GM12878 (cell line): ENCODE measurements at regions of chr1 and their contacts with region 1.

Region 1: DNA sequence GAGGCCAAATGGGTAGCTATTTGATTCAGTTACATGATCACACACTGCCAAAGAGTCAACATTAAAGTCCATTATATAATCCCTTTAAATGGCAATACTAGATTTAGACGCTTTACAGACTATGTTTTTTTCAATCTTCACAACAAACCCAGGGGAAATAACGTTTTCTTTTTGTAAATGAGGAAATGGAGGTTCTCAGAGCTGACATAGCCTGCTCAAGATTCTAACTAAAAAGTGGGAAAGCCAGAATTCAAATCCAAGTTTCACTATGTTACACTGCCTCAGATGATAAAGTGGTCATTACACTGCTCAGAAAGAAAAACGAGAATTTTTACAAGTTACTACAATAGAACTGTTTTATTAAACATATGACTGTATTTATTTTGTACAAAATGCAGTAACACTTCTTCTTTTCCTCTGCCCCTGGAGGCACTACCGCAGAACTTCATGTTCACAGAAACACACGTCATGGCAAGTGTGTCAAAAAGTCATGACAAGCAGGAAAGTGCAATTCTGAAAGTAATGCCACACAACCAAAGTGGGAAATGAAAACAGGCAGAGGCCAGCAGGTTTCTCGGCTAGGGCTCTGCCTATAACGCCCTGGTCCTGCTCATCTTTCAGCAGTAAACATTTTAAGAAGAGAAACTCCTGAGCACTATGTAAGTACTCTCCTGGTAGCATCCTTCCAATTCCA is 19.0 kb downstream of the THEMIS2 start:
- DNase-seq: peak; percentile 86
- ATAC-seq: peak; percentile 71
- H3K4me3 ChIP-seq: peak overlapping the region; percentile 22
- H3K27ac ChIP-seq: peak overlapping the region; percentile 95
- H3K4me1 ChIP-seq: peaks cover 55% of the 10 kb centered on the region
- H3K27me3 ChIP-seq: no peaks in the 10 kb centered on the region
- CTCF ChIP-seq: peak; percentile 17 to 46 (median 44); a peak in 4 of 6 replicates
- EP300 ChIP-seq: peak; percentile 80 to 97; a peak in 3 of 4 replicates
- POLR2A ChIP-seq: no peak
- RAD21 ChIP-seq: peak; percentile 25; the same call in 1 of the 2 replicates

Region 2: GRCh38 chr1:27872059-27872801 is 19.1 kb before region 1 on chr1 and contains the start of gene THEMIS2:
- CTCF ChIA-PET with region 1: interaction called, 16 read pairs
- POLR2A ChIA-PET with region 1: interaction called, 63 read pairs
- RAD21 ChIA-PET with region 1: interaction called, 46 read pairs
- SMC1A ChIA-PET with region 1: interaction called, 43 read pairs
- in situ Hi-C with region 1: no loop called
- intact Hi-C with region 1: loop called (anchors 2 kb)
- DNase-seq: no peak
- ATAC-seq: peak; percentile 66
- H3K4me3 ChIP-seq: peak within 1 kb of the TSS; percentile 90
- H3K27ac ChIP-seq: peak within 1 kb of the TSS; percentile 93
- H3K4me1 ChIP-seq: peaks cover 44% of the 10 kb centered on the region
- H3K27me3 ChIP-seq: no peaks in the 10 kb centered on the region
- CTCF ChIP-seq: no peak
- EP300 ChIP-seq: no peak
- POLR2A ChIP-seq: peak; percentile 88
- RAD21 ChIP-seq: no peak
- polyA plus RNA-seq, gene THEMIS2: 9.1 to 12.9 TPM

Region 3: GRCh38 chr1:27906759-27907158 is 15.4 kb after region 1 on chr1:
- CTCF ChIA-PET with region 1: interaction called, 3 read pairs
- POLR2A ChIA-PET with region 1: interaction called, 10 read pairs
- RAD21 ChIA-PET with region 1: interaction called, 3 read pairs
- SMC1A ChIA-PET with region 1: interaction called, 28 read pairs
- in situ Hi-C with region 1: no loop called
- intact Hi-C with region 1: no loop called
- DNase-seq: no peak
- ATAC-seq: no peak
- H3K4me3 ChIP-seq: no peak overlapping the region
- H3K27ac ChIP-seq: no peak overlapping the region
- H3K4me1 ChIP-seq: no peaks in the 10 kb centered on the region
- H3K27me3 ChIP-seq: no peaks in the 10 kb centered on the region
- CTCF ChIP-seq: no peak
- EP300 ChIP-seq: no peak
- POLR2A ChIP-seq: no peak
- RAD21 ChIP-seq: no peak

Region 4: DNA sequence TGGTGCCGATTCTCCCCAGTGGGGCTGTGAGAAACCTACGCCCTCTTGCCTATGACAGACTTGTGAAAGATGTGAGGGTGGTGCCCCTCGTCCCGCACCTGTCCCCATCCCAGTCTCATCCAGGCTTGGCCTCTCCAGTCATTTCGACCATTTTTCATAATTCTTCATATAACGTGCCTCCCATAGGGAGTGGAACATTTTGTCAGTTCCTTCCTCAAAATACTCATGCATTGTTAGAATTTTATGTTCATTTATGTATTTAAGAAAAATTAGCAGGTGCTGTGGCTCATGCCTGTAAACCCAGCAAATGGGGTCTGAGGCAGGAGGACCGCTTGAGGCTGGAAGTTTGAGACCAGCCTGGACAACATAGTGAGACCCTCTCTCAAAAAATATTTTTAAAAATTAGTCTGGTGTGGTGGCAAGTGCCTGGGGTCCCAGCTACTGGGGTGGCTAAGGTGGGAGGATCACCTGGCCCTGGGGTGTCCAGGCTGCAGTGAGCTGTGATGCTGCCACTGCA is 23.8 kb after region 1 on chr1:
- CTCF ChIA-PET with region 1: interaction called, 3 read pairs
- POLR2A ChIA-PET with region 1: interaction called, 10 read pairs
- RAD21 ChIA-PET with region 1: interaction called, 3 read pairs
- SMC1A ChIA-PET with region 1: interaction called, 28 read pairs
- in situ Hi-C with region 1: no loop called
- intact Hi-C with region 1: no loop called
- DNase-seq: no peak
- ATAC-seq: no peak
- H3K4me3 ChIP-seq: no peak overlapping the region
- H3K27ac ChIP-seq: peak overlapping the region; percentile 85; the same call in 1 of the 2 replicates
- H3K4me1 ChIP-seq: no peaks in the 10 kb centered on the region; the same call in 1 of the 2 replicates
- H3K27me3 ChIP-seq: no peaks in the 10 kb centered on the region
- CTCF ChIP-seq: no peak
- EP300 ChIP-seq: no peak
- POLR2A ChIP-seq: no peak
- RAD21 ChIP-seq: no peak

Region 5: DNA sequence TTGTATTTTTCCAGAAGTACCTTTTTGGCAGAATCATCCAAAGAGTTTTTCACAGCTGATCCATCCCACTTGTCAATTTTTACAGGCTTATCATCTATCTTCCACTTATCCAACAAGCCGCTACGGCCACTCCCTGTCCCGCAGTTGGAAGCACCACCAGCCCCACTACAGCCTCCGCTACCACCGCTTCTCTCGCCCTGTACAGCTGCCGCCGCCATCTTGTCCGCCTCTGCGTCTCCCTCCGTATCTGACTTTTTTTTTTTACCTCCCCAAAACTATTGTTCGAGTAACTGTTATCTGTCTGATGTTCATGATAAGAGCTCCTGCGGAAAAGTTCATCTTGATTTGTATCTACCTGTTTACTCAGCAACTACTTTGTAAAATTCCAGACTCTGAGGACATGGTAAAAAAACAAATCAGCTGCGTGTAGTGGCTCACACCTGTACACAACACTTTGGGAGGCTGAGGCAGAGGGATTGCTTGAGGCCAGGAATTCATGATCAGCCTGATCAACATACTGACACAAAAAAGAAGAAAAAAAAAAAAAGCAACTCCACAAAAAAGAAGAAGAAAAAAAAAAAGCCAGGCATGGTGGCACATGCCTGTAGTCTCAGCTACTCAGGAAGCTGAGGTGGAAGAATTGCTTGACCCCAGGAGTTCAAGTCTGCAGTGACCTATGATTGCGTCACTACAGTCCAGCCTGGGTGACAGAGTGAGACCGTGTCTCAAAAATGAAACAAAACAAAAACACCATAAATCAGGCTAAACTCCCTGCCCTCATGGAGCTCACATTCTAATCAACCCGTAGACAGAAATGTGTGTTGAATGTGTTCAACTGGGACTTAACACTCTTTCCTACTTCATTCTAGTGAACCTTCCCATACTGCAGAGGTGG is 205.1 kb after region 1 on chr1:
- CTCF ChIA-PET with region 1: no interaction called
- POLR2A ChIA-PET with region 1: no interaction called
- RAD21 ChIA-PET with region 1: no interaction called
- SMC1A ChIA-PET with region 1: no interaction called
- in situ Hi-C with region 1: no loop called
- intact Hi-C with region 1: no loop called
- DNase-seq: no peak
- ATAC-seq: no peak
- H3K4me3 ChIP-seq: no peak overlapping the region
- H3K27ac ChIP-seq: 0 out of 2 replicates have a peak overlapping the region, but pooled peaks have one; percentile 63
- H3K4me1 ChIP-seq: peaks cover 12% of the 10 kb centered on the region
- H3K27me3 ChIP-seq: no peaks in the 10 kb centered on the region
- CTCF ChIP-seq: no peak
- EP300 ChIP-seq: no peak
- POLR2A ChIP-seq: no peak
- RAD21 ChIP-seq: no peak